Activated CD4-positive, alpha-beta memory T cell treated with anti-CD3 and anti-CD28 coated beads for 36 hours (primary cell): ENCODE measurements at regions of chrX and their contacts with region 1.

Region 1: DNA sequence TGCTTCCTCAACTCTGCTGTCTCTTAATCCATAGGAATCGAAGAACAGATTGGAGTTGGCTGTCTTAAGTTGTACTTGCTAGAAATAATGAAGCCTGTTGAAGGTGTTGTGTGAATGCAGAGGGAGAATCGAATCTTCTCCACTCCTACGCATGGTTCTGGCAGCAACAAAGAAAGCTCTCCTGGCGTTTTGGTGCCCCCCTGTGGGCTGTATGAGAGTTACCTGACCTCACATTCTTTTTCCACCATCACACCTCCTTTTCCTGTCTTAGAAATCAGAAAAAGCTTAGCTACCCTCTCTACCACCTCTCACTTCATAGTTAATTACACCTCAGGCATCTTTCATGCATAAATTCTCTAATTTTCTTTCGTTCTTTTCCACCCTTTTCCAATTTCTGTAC is 16.3 kb downstream of the KLF8 start:
- DNase-seq: peak; percentile 70
- H3K4me3 Mint-ChIP-seq: no peak overlapping the region
- H3K27ac Mint-ChIP-seq: no peak overlapping the region
- H3K4me1 Mint-ChIP-seq: peaks cover 7% of the 10 kb centered on the region
- H3K27me3 Mint-ChIP-seq: no peaks in the 10 kb centered on the region

Region 2: DNA sequence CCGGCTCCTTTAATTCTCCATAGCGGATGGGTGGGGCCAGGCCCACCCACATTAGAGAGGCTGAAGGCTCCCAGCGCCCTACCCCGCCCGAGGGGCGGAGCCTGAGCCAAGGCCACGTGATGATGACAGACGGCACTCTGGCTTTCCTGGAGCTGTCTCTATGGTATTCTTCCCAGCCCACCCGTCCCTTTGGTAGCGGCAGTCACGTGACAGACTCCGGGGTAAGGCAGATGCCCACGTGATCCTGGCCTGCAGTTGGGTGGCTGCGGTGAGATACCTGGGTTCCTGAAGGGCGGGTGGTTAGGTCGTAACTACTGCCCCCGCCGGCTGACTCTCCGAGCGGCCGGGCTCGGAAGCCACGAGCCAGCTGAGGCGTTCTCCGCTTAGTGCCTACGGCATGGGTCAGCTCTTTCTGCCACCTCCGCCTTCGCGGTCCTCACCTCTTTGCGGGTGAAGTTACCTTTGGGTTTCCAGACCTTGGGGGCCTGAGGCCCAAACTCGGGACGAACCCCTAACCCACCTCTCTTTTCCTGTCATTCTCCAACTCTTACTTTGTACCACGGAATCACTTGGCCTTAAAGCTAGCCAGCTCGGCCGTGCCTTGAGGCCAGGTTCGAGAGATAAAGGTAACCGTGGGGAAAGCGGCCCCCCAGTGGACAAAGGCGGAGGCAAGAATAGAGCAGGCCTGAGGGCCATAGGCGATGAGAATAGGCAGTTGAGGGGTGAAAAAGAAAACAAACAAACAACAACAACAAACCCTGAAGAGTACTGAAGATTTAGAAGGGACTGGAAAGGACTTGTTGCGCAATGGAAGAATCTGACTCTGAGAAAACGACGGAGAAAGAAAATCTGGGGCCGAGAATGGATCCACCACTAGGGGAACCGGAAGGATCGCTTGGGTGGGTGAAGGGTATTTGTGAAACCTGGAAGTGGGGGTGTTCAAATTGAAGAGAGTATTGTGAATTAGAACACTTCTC is 530.7 kb before region 1 on chrX and contains the start of gene RRAGB:
- CTCF ChIA-PET with region 1: interaction called, 4 read pairs
- POLR2A ChIA-PET with region 1: no interaction called
- intact Hi-C with region 1: loop called (anchors 5 kb)
- DNase-seq: peak; percentile 93
- H3K4me3 Mint-ChIP-seq: peak within 1 kb of the TSS; percentile 83
- H3K27ac Mint-ChIP-seq: peak within 1 kb of the TSS; percentile 87
- H3K4me1 Mint-ChIP-seq: peaks cover 35% of the 10 kb centered on the region
- H3K27me3 Mint-ChIP-seq: no peaks in the 10 kb centered on the region
- total RNA-seq, gene RRAGB: 4.9 to 5.3 TPM

Region 3: GRCh38 chrX:55907968-55908607 is 340.4 kb before region 1 on chrX:
- CTCF ChIA-PET with region 1: no interaction called
- POLR2A ChIA-PET with region 1: no interaction called
- intact Hi-C with region 1: loop called (anchors 5 kb)
- DNase-seq: peak; percentile 71
- H3K4me3 Mint-ChIP-seq: peak overlapping the region; percentile 82
- H3K27ac Mint-ChIP-seq: peak overlapping the region; percentile 69
- H3K4me1 Mint-ChIP-seq: peaks cover 13% of the 10 kb centered on the region
- H3K27me3 Mint-ChIP-seq: no peaks in the 10 kb centered on the region

Region 4: GRCh38 chrX:56232221-56233082 is 16.0 kb before region 1 on chrX and contains the start of gene KLF8:
- CTCF ChIA-PET with region 1: interaction called, 13 read pairs
- POLR2A ChIA-PET with region 1: no interaction called
- intact Hi-C with region 1: no loop called
- DNase-seq: peak; percentile 61
- H3K4me3 Mint-ChIP-seq: peak within 1 kb of the TSS; percentile 72
- H3K27ac Mint-ChIP-seq: no peak within 1 kb of the TSS
- H3K4me1 Mint-ChIP-seq: peaks cover 12% of the 10 kb centered on the region
- H3K27me3 Mint-ChIP-seq: no peaks in the 10 kb centered on the region
- total RNA-seq, gene KLF8: 3.2 to 4.4 TPM

Region 5: DNA sequence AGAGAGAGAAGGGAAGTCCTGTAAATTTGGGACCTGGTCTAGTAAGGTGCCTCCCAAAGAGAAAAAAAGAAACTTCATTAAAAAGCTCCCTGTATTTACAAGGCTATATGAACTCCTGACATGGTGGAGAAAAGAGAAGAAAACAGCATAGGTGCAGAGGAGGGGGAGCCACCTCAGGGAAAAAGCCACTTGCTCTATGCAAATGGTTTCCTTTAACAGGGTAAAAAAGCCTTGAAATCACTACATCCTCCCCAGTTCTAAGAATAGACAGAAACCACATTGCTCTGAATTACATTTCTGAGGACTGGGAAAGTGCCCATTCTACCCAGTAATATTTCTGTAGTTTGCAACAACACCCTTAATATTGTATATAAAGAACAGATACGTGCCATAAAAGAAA is 149.1 kb after region 1 on chrX:
- CTCF ChIA-PET with region 1: no interaction called
- POLR2A ChIA-PET with region 1: no interaction called
- intact Hi-C with region 1: no loop called
- DNase-seq: peak; percentile 46
- H3K4me3 Mint-ChIP-seq: peak overlapping the region; percentile 45
- H3K27ac Mint-ChIP-seq: peak overlapping the region; percentile 85
- H3K4me1 Mint-ChIP-seq: peaks cover 58% of the 10 kb centered on the region
- H3K27me3 Mint-ChIP-seq: no peaks in the 10 kb centered on the region

Region 6: GRCh38 chrX:57406149-57406548 is 1157.7 kb after region 1 on chrX:
- CTCF ChIA-PET with region 1: no interaction called
- POLR2A ChIA-PET with region 1: no interaction called
- intact Hi-C with region 1: no loop called
- DNase-seq: no peak
- H3K4me3 Mint-ChIP-seq: no peak overlapping the region
- H3K27ac Mint-ChIP-seq: no peak overlapping the region
- H3K4me1 Mint-ChIP-seq: no peaks in the 10 kb centered on the region
- H3K27me3 Mint-ChIP-seq: no peaks in the 10 kb centered on the region